PC-3 (cell line): ENCODE measurements at regions of chr2 and their contacts with region 1.

Region 1: DNA sequence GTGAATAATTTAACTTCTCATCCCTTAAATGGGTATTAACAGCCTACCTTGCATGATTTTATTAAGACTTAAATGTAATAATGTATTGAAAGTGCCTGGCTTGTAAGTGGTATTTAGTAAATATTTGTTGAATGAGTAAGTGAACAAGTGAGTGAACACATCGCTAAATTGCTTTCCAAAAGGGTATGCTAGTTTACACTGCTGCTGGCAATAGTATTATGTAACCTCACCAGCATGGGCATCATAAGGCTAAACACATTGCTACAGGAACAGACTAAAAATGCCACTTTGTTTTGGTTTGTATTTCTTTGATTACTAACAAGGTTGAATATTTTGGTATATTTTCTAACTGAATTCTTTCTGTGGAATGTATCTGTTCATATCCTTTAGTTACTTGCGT is 9.8 kb downstream of the WDR43 start:
- DNase-seq: peak; percentile 63
- ATAC-seq: peak; percentile 93
- H3K4me3 ChIP-seq: no peak overlapping the region
- H3K27ac ChIP-seq: no peak overlapping the region
- H3K4me1 ChIP-seq: peaks cover 25% of the 10 kb centered on the region
- H3K27me3 ChIP-seq: no peaks in the 10 kb centered on the region
- CTCF ChIP-seq: no peak

Region 2: GRCh38 chr2:28119631-28120030 is 784.7 kb before region 1 on chr2:
- CTCF ChIA-PET with region 1: no interaction called
- POLR2A ChIA-PET with region 1: no interaction called
- intact Hi-C with region 1: no loop called
- DNase-seq: no peak
- ATAC-seq: no peak
- H3K4me3 ChIP-seq: no peak overlapping the region
- H3K27ac ChIP-seq: no peak overlapping the region
- H3K4me1 ChIP-seq: no peaks in the 10 kb centered on the region
- H3K27me3 ChIP-seq: no peaks in the 10 kb centered on the region
- CTCF ChIP-seq: no peak

Region 3: DNA sequence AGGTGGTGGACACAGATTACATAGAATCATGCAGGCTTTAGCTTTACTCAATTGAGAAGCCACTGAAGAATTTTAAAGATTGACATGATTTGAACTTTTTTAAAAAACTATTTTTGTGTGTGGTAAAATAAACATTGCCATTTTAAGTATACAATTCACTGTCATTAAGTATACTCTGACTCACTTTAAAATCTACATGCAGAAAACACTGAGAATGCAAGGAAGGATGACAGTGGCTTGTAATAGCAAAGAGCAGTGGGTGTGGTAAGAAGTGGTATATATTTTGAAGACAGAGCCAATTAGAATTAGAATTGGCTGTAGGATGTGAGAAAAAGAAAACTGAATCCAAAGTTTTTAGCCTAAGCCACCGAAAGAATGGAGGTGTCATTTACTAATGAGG is 49.1 kb before region 1 on chr2:
- CTCF ChIA-PET with region 1: no interaction called
- POLR2A ChIA-PET with region 1: no interaction called
- intact Hi-C with region 1: loop called (anchors 5 kb)
- DNase-seq: peak; percentile 58
- ATAC-seq: peak; percentile 100
- H3K4me3 ChIP-seq: no peak overlapping the region
- H3K27ac ChIP-seq: peak overlapping the region; percentile 60
- H3K4me1 ChIP-seq: peaks cover 11% of the 10 kb centered on the region
- H3K27me3 ChIP-seq: no peaks in the 10 kb centered on the region
- CTCF ChIP-seq: no peak